A673 (cell line): ENCODE measurements at regions of chr12 and their contacts with region 1.

Region 1: DNA sequence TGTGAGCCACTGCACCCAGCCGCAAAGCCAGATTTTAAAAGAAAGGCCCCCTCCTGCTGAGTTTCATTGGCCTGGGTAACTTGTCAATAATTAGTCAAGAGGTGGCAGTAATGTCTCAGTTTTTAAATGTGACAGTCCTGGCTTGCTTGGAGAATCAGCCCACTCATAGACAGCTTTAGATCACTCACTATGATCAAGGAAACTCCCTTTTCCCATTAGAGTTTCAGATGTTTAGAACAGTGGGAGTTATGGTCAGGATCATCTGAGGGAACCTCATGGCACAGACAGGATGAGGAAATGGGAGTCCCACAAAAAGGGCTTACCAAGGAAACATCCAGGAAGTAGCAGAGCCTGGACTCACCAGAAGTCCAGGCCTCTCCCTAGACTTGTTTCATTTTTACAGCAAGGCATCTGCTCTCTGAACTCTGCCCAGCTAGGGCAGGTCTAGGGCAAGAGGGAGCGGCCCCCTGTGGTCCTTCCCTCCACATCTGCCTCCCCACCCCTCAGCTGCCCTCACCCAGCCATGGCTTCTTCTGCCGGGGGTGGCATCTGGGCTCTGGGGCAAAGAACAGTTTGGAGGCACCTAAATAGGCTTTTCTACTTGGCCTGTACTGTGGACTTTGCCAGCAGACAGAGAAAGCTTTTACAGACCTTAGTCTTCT is 11.2 kb downstream of the BCL2L14 start:
- DNase-seq: peak; percentile 91
- H3K4me3 ChIP-seq: no peak overlapping the region
- H3K27ac ChIP-seq: peak overlapping the region; percentile 70
- H3K4me1 ChIP-seq: peaks cover 8% of the 10 kb centered on the region
- H3K27me3 ChIP-seq: no peaks in the 10 kb centered on the region
- CTCF ChIP-seq: peak; percentile 62

Region 2: DNA sequence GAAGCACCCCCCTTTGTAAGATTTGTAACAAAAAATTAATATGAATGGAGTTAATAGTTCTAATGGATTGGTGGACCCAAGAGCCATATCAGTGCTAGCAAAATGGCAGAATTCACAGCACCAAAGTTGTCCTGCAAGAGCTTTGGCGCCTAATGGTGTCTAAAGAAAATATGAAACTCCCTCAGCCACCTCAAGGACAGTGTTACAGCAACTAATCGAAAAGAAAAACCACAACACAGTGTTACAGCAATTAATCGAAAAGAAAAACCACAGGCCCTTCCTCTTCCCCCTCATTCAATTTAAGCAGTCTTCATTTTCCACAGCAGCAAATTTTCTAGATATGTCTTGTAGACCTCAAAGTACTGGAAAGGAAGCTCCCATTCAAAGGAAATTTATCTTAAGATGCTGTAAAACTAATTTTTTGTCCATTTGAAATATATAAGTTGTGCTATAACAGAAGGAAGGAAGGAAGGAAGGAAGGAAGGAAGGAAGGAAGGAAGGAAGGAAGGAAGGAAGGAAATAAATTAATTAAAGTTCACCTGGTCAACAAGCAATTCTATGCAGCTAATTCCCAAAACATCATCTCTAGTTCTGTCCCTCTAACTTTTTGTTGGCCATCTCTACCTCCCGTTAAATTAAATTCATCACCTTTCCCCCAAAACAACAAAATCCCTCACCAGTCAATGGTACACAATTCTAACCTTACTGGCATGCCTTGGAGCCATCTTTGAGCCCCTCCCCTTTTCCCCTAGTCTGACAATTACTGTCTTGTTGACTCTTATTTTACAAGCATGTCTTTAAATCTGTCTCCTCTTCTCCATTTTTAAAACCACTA is 167.5 kb after region 1 on chr12:
- CTCF ChIA-PET with region 1: interaction called, 3 read pairs
- POLR2A ChIA-PET with region 1: no interaction called
- intact Hi-C with region 1: loop called (anchors 2 kb)
- DNase-seq: peak; percentile 94
- H3K4me3 ChIP-seq: no peak overlapping the region
- H3K27ac ChIP-seq: peak overlapping the region; percentile 99
- H3K4me1 ChIP-seq: peaks cover 68% of the 10 kb centered on the region
- H3K27me3 ChIP-seq: no peaks in the 10 kb centered on the region
- CTCF ChIP-seq: peak; percentile 19; the same call in 1 of the 2 replicates

Region 3: DNA sequence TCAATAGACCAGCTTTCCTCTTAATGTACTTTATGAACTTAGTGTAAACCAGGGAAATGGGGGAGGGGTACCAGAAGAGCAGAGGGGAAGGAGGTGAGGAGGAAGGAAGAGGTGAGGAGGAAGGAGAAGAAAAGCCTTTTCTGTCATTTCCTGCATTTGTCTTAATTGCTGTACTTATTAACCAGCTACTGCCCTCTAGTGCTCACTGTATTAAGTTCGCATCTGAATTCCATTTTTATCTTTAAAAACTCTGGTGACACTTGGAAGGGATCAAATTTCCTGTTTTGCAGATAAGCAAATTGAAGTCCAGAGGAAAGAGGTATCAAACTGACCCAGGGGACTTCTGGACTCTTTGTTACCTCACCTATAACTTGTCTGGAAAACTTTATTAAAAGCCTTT is 245.8 kb after region 1 on chr12:
- CTCF ChIA-PET with region 1: interaction called, 11 read pairs
- POLR2A ChIA-PET with region 1: no interaction called
- intact Hi-C with region 1: loop called (anchors 2 kb)
- DNase-seq: peak; percentile 86
- H3K4me3 ChIP-seq: no peak overlapping the region
- H3K27ac ChIP-seq: peak overlapping the region; percentile 51
- H3K4me1 ChIP-seq: peaks cover 19% of the 10 kb centered on the region
- H3K27me3 ChIP-seq: no peaks in the 10 kb centered on the region
- CTCF ChIP-seq: peak; percentile 76

Region 4: GRCh38 chr12:12334367-12335040 is 252.5 kb after region 1 on chr12:
- CTCF ChIA-PET with region 1: interaction called, 11 read pairs
- POLR2A ChIA-PET with region 1: no interaction called
- intact Hi-C with region 1: loop called (anchors 1 kb)
- DNase-seq: peak; percentile 75
- H3K4me3 ChIP-seq: no peak overlapping the region
- H3K27ac ChIP-seq: peak overlapping the region; percentile 65
- H3K4me1 ChIP-seq: peaks cover 24% of the 10 kb centered on the region
- H3K27me3 ChIP-seq: no peaks in the 10 kb centered on the region
- CTCF ChIP-seq: peak; percentile 93

Region 5: GRCh38 chr12:12704593-12705230 is 622.7 kb after region 1 on chr12:
- CTCF ChIA-PET with region 1: no interaction called
- POLR2A ChIA-PET with region 1: no interaction called
- intact Hi-C with region 1: loop called (anchors 5 kb)
- DNase-seq: peak; percentile 92
- H3K4me3 ChIP-seq: no peak overlapping the region
- H3K27ac ChIP-seq: no peak overlapping the region
- H3K4me1 ChIP-seq: peaks cover 12% of the 10 kb centered on the region
- H3K27me3 ChIP-seq: no peaks in the 10 kb centered on the region
- CTCF ChIP-seq: peak; percentile 89